ENCODE measurements at regions of chr13 and their contacts with region 1.

Region 1: GRCh38 chr13:20525690-20526544 is at the start of gene CRYL1:
- DNase-seq: peak; percentile 75 to 94 (median 83)
- H3K4me3 ChIP-seq: peak within 1 kb of the TSS; percentile 49 to 99 (median 90)
- H3K27ac ChIP-seq: peak within 1 kb of the TSS; percentile 77 to 99 (median 96)
- H3K27me3 ChIP-seq: no peaks in the 10 kb centered on the region
- CTCF ChIP-seq: peak in 8 of 56 donors; percentile 4 to 36 (median 11)
- total RNA-seq, gene CRYL1: 41.1 to 127 (median 74.6) TPM

Region 2: DNA sequence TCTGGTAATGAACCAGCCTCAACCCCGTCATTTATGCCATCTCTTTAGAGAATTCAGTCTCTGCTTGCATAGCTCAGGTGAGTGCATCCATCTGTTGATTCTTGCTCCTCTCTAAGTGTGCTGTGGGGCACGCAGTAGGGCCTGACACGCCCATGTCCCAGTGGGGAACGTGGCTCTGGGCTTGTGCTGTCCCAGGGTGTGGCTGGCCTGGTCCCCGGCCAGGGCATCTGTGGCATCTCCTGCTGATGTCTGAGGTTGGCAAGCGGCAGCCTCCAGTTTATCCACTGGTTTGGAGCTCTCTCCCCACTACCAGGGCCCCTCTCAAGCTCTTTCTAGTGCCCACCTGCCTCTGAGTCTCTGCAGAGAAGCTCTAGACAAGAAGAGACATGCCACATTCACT is 147.2 kb before region 1 on chr13:
- intact Hi-C with region 1: no loop called
- DNase-seq: no peak
- H3K4me3 ChIP-seq: no peak overlapping the region
- H3K27ac ChIP-seq: no peak overlapping the region
- H3K27me3 ChIP-seq: no peaks in the 10 kb centered on the region
- CTCF ChIP-seq: no peak

Region 3: DNA sequence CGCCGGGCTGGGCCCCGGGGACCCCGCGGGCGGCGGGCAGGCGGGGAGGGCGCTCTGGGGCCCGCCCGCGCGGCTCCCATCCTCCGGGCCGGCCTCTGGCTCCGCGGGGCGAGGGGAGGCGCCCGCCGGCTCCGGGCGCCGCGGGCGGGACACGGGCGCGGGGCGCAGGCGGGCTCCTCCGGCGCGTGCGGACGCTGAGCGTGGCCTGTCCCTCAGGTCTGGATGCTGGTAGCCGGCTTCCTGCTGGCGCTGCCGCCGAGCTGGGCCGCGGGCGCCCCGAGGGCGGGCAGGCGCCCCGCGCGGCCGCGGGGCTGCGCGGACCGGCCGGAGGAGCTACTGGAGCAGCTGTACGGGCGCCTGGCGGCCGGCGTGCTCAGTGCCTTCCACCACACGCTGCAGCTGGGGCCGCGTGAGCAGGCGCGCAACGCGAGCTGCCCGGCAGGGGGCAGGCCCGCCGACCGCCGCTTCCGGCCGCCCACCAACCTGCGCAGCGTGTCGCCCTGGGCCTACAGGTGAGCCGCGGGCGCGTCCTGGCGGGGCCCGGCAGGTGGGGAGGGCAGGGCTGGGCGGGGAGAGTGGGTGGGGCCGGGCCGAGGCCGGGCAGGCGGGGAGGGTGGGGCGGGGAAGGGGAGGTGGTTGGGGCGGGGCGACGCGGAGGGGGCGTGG is 178.0 kb after region 1 on chr13:
- intact Hi-C with region 1: loop called (anchors 10 kb)
- DNase-seq: peak in 9 of 10 donors; percentile 46 to 84 (median 59)
- H3K4me3 ChIP-seq: peak overlapping the region in 57 of 59 donors; percentile 21 to 90 (median 52)
- H3K27ac ChIP-seq: peak overlapping the region in 37 of 59 donors; percentile 13 to 86 (median 71)
- H3K27me3 ChIP-seq: no peaks in the 10 kb centered on the region
- CTCF ChIP-seq: peak in 45 of 56 donors; percentile 15 to 60 (median 40)

Measured in dorsolateral prefrontal cortex (tissue), 120 donors.